Activated CD4-positive, alpha-beta memory T cell treated with anti-CD3 and anti-CD28 coated beads, Interleukin-2, amount 10 ng/mL, durations not matched to agents 7 days and 5 days (primary cell): ENCODE measurements at regions of chr3 and their contacts with region 1.

Region 1: GRCh38 chr3:18740631-18741583 is 315.8 kb upstream of the SATB1 start:
- DNase-seq: peak; percentile 72
- H3K4me3 Mint-ChIP-seq: peak overlapping the region; percentile 71
- H3K27ac Mint-ChIP-seq: peak overlapping the region; percentile 92
- H3K4me1 Mint-ChIP-seq: peaks cover 89% of the 10 kb centered on the region
- H3K27me3 Mint-ChIP-seq: no peaks in the 10 kb centered on the region

Region 2: GRCh38 chr3:18444595-18445400 is 296.1 kb before region 1 on chr3:
- CTCF ChIA-PET with region 1: no interaction called
- POLR2A ChIA-PET with region 1: interaction called, 12 read pairs
- DNase-seq: peak; percentile 81
- H3K4me3 Mint-ChIP-seq: peak overlapping the region; percentile 94
- H3K27ac Mint-ChIP-seq: peak overlapping the region; percentile 91
- H3K4me1 Mint-ChIP-seq: peaks cover 39% of the 10 kb centered on the region
- H3K27me3 Mint-ChIP-seq: no peaks in the 10 kb centered on the region

Region 3: GRCh38 chr3:18544146-18544545 is 196.8 kb before region 1 on chr3:
- CTCF ChIA-PET with region 1: no interaction called
- POLR2A ChIA-PET with region 1: no interaction called
- DNase-seq: no peak
- H3K4me3 Mint-ChIP-seq: no peak overlapping the region
- H3K27ac Mint-ChIP-seq: no peak overlapping the region
- H3K4me1 Mint-ChIP-seq: peaks cover 2% of the 10 kb centered on the region
- H3K27me3 Mint-ChIP-seq: no peaks in the 10 kb centered on the region

Region 4: GRCh38 chr3:18559331-18559842 is 181.5 kb before region 1 on chr3:
- CTCF ChIA-PET with region 1: interaction called, 10 read pairs
- POLR2A ChIA-PET with region 1: interaction called, 5 read pairs
- DNase-seq: peak; percentile 42
- H3K4me3 Mint-ChIP-seq: no peak overlapping the region
- H3K27ac Mint-ChIP-seq: peak overlapping the region; percentile 80
- H3K4me1 Mint-ChIP-seq: peaks cover 59% of the 10 kb centered on the region
- H3K27me3 Mint-ChIP-seq: no peaks in the 10 kb centered on the region

Region 5: GRCh38 chr3:18679238-18679637 is 61.7 kb before region 1 on chr3:
- CTCF ChIA-PET with region 1: no interaction called
- POLR2A ChIA-PET with region 1: interaction called, 40 read pairs
- DNase-seq: peak; percentile 64
- H3K4me3 Mint-ChIP-seq: peak overlapping the region; percentile 43
- H3K27ac Mint-ChIP-seq: peak overlapping the region; percentile 85
- H3K4me1 Mint-ChIP-seq: peaks cover 79% of the 10 kb centered on the region
- H3K27me3 Mint-ChIP-seq: no peaks in the 10 kb centered on the region

Region 6: GRCh38 chr3:18725668-18726407 is 15.1 kb before region 1 on chr3:
- CTCF ChIA-PET with region 1: interaction called, 5 read pairs
- POLR2A ChIA-PET with region 1: interaction called, 112 read pairs
- DNase-seq: peak; percentile 47
- H3K4me3 Mint-ChIP-seq: peak overlapping the region; percentile 70
- H3K27ac Mint-ChIP-seq: peak overlapping the region; percentile 86
- H3K4me1 Mint-ChIP-seq: peaks cover 64% of the 10 kb centered on the region
- H3K27me3 Mint-ChIP-seq: no peaks in the 10 kb centered on the region

Region 7: DNA sequence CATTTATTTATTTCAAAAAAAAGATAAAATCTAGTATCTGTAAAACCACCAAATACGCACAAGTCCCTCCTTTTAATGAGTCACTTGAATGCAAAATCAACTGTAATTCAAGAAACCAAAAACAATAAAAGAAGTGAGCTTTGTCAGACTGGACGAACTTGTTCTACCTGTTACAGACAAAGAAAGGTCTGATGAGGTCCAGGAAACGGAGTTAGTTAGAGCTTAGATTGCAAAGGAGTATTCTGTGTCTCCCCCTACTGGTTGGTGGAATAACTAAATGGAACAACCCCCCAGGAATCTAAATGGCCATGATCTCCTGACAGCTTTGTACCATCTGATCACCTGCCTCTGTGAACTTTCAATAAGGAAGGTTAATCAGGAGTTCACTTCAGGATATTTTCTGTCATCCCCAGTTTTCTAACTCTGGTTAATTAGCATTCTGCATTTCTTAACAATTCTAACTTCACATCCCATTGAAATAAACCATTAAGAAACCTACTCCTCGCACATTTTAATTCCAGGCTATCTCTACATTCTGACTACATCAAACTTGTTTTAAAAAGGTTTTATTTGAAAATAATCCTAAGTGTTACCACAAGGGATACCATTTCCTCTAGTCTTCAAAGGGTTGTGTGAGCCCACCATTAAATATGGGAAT is 17.3 kb after region 1 on chr3:
- CTCF ChIA-PET with region 1: interaction called, 20 read pairs
- POLR2A ChIA-PET with region 1: interaction called, 22 read pairs
- DNase-seq: no peak
- H3K4me3 Mint-ChIP-seq: no peak overlapping the region
- H3K27ac Mint-ChIP-seq: peak overlapping the region; percentile 40
- H3K4me1 Mint-ChIP-seq: peaks cover 36% of the 10 kb centered on the region
- H3K27me3 Mint-ChIP-seq: no peaks in the 10 kb centered on the region